Naive thymus-derived CD4-positive, alpha-beta T cell (primary cell): ENCODE measurements at regions of chr13 and their contacts with region 1.

Region 1: DNA sequence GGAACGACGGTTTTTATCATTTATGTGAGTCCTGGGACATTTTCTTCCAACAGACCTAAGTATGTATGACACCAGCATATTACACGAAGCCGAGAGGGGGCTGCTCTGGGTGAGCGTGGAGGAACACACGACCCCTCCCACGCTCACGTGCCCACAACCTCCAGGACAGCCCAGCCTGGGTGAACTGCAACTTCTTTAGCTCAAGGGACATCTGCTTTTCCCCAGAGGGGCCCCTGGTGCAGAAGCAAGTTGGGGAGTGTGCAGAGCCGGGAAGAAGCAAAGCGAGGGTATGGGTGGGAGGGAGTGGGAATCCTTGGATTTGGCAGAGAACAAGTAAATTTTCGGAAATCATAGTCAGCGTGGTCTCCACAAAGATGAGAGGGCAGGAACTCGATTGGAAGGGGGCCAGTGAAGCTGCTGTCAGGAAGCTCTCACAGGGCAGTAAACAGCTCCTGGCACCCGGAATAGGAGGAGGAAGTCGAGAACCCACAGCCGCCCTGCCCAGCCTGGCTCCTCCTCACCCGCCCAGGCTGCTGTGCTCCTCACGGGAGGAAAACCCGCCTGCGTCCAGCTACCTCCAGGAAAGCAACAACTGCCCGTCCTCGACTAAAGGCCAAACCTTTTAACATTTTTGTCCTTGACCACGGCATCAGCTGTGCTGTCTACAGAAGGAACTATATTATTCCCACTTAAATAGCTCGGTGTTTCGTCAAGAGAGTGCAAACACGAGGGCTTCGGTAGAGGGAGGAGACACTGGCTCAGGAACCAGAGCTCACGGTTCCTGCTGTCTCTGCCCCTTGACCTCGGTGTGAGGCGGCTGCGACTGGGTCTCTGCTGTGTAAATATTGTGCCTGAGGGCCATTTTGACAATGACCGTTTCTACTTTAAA is 17.2 kb upstream of the CFAP97D2 start:
- DNase-seq: peak in 5 of 9 donors; percentile 41 to 61 (median 59)
- ATAC-seq: peak; percentile 81
- H3K4me3 ChIP-seq: peak overlapping the region; percentile 45
- H3K4me3 Mint-ChIP-seq: peak overlapping the region; percentile 76 to 92 (median 84)
- H3K27ac ChIP-seq: peak overlapping the region; percentile 73
- H3K27ac Mint-ChIP-seq: peak overlapping the region; percentile 66 to 99 (median 96)
- H3K4me1 ChIP-seq: peaks cover 43 to 65% of the 10 kb centered on the region in 2 donors
- H3K4me1 Mint-ChIP-seq: peaks cover 59 to 95% (median 92%) of the 10 kb centered on the region in 7 donors
- H3K27me3 ChIP-seq: no peaks in the 10 kb centered on the region
- H3K27me3 Mint-ChIP-seq: peaks cover 0 to 36% (median 0%) of the 10 kb centered on the region in 5 donors

Region 2: GRCh38 chr13:114132419-114133121 is 29.3 kb before region 1 on chr13 and contains the start of gene RASA3:
- CTCF ChIA-PET with region 1: interaction called, 4 read pairs
- POLR2A ChIA-PET with region 1: interaction called, 36 read pairs
- intact Hi-C with region 1: loop called in 1 of 2 experiments (anchors 5 kb)
- DNase-seq: peak in 8 of 9 donors; percentile 52 to 75 (median 58)
- ATAC-seq: peak; percentile 69
- H3K4me3 ChIP-seq: peak within 1 kb of the TSS; percentile 90
- H3K4me3 Mint-ChIP-seq: peak within 1 kb of the TSS; percentile 96 to 100 (median 100)
- H3K27ac ChIP-seq: peak within 1 kb of the TSS; percentile 85
- H3K27ac Mint-ChIP-seq: peak within 1 kb of the TSS; percentile 82 to 100 (median 99)
- H3K4me1 ChIP-seq: peaks cover 32 to 49% of the 10 kb centered on the region in 2 donors
- H3K4me1 Mint-ChIP-seq: peaks cover 36 to 74% (median 56%) of the 10 kb centered on the region in 7 donors
- H3K27me3 ChIP-seq: no peaks in the 10 kb centered on the region
- H3K27me3 Mint-ChIP-seq: peaks cover 0 to 4% (median 0%) of the 10 kb centered on the region in 5 donors
- total RNA-seq, gene RASA3: 110 to 227 (median 199) TPM

Region 3: GRCh38 chr13:114151565-114152284 is 10.2 kb before region 1 on chr13:
- CTCF ChIA-PET with region 1: interaction called, 12 read pairs
- POLR2A ChIA-PET with region 1: interaction called, 100 read pairs
- intact Hi-C with region 1: loop called in 1 of 2 experiments (anchors 1 kb)
- DNase-seq: peak in 5 of 9 donors; percentile 45 to 73 (median 57)
- ATAC-seq: no peak
- H3K4me3 ChIP-seq: peak overlapping the region; percentile 39
- H3K4me3 Mint-ChIP-seq: peak overlapping the region; percentile 56 to 90 (median 67)
- H3K27ac ChIP-seq: peak overlapping the region; percentile 92
- H3K27ac Mint-ChIP-seq: peak overlapping the region; percentile 85 to 100 (median 100)
- H3K4me1 ChIP-seq: peaks cover 64 to 72% of the 10 kb centered on the region in 2 donors
- H3K4me1 Mint-ChIP-seq: peaks cover 59 to 83% (median 80%) of the 10 kb centered on the region in 7 donors
- H3K27me3 ChIP-seq: no peaks in the 10 kb centered on the region
- H3K27me3 Mint-ChIP-seq: peaks cover 0 to 17% (median 0%) of the 10 kb centered on the region in 5 donors

Region 4: DNA sequence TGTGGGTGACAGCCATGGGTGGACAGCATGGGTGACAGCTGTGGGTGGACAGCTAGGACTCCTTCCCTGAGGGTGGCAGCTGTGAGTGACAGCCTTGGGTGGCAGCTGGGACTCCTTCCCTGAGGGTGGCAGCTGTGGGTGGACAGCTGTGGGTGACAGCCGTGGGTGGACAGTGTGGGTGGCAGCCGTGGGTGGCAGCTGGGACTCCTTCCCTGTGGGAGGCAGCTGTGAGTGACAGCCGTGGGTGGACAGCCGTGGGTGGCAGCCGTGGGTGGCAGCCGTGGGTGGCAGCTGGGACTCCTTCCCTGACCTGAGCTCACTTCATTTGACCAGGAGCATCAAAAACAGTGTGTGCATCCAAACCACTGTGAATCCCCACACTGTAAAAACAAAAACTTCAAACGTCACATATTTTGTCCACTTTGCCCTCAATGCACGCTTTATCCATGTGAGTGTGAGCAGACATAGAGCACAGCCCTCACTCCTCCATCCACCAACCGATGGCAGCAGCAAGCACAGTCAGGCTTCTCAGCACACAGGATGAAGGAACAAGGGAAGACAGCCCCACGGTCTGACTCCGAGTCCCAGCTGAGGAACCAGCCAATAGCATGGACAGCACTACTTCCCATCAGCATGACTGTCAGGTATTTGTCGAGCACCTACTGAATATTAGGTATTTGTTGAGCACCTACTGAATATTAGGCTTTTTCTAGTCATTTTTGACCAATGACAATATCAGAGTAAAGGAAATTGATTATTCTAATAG is 15.5 kb after region 1 on chr13:
- CTCF ChIA-PET with region 1: interaction called, 5 read pairs
- POLR2A ChIA-PET with region 1: interaction called, 11 read pairs
- intact Hi-C with region 1: loop called in 1 of 2 experiments (anchors 2 kb)
- DNase-seq: no peak
- ATAC-seq: no peak
- H3K4me3 ChIP-seq: no peak overlapping the region
- H3K4me3 Mint-ChIP-seq: peak overlapping the region in 1 of 10 donors; percentile 25
- H3K27ac ChIP-seq: no peak overlapping the region
- H3K27ac Mint-ChIP-seq: peak overlapping the region in 7 of 9 donors; percentile 38 to 87 (median 62)
- H3K4me1 ChIP-seq: peaks cover 18 to 23% of the 10 kb centered on the region in 2 donors
- H3K4me1 Mint-ChIP-seq: peaks cover 15 to 69% (median 57%) of the 10 kb centered on the region in 7 donors
- H3K27me3 ChIP-seq: no peaks in the 10 kb centered on the region
- H3K27me3 Mint-ChIP-seq: peaks cover 0 to 22% (median 0%) of the 10 kb centered on the region in 5 donors